ENCODE measurements at regions of chr1 and their contacts with region 1.

Region 1: GRCh38 chr1:112674439-112674985 is at the start of gene MOV10:
- DNase-seq: peak; percentile 36
- H3K4me3 ChIP-seq: peak within 1 kb of the TSS; percentile 80
- H3K27ac ChIP-seq: peak within 1 kb of the TSS; percentile 86
- H3K27me3 ChIP-seq: no peaks in the 10 kb centered on the region
- CTCF ChIP-seq: no peak
- polyA plus RNA-seq, gene MOV10: 58.1 and 59.2 TPM in 2 replicates

Region 2: GRCh38 chr1:112144733-112145426 is 529.6 kb before region 1 on chr1:
- CTCF ChIA-PET with region 1: no interaction called
- POLR2A ChIA-PET with region 1: no interaction called
- DNase-seq: no peak
- H3K4me3 ChIP-seq: no peak overlapping the region
- H3K27ac ChIP-seq: no peak overlapping the region
- H3K27me3 ChIP-seq: no peaks in the 10 kb centered on the region
- CTCF ChIP-seq: no peak

Region 3: GRCh38 chr1:112619520-112620376 is 54.8 kb before region 1 on chr1 and contains the start of gene CAPZA1:
- CTCF ChIA-PET with region 1: no interaction called
- POLR2A ChIA-PET with region 1: interaction called, 13 read pairs
- DNase-seq: peak; percentile 78
- H3K4me3 ChIP-seq: peak within 1 kb of the TSS; percentile 98
- H3K27ac ChIP-seq: peak within 1 kb of the TSS; percentile 96
- H3K27me3 ChIP-seq: no peaks in the 10 kb centered on the region
- CTCF ChIP-seq: no peak
- polyA plus RNA-seq, gene CAPZA1: 195 and 273 TPM in 2 replicates

Region 4: GRCh38 chr1:112651205-112651604 is 23.3 kb before region 1 on chr1:
- CTCF ChIA-PET with region 1: interaction called, 10 read pairs
- POLR2A ChIA-PET with region 1: no interaction called
- DNase-seq: no peak
- H3K4me3 ChIP-seq: no peak overlapping the region
- H3K27ac ChIP-seq: no peak overlapping the region
- H3K27me3 ChIP-seq: no peaks in the 10 kb centered on the region
- CTCF ChIP-seq: no peak

Region 5: GRCh38 chr1:112700290-112701226 is 26.0 kb after region 1 on chr1:
- CTCF ChIA-PET with region 1: interaction called, 4 read pairs
- POLR2A ChIA-PET with region 1: interaction called, 25 read pairs
- DNase-seq: peak; percentile 89
- H3K4me3 ChIP-seq: peak overlapping the region; percentile 17; the same call in 1 of the 2 replicates
- H3K27ac ChIP-seq: peak overlapping the region; percentile 92
- H3K27me3 ChIP-seq: no peaks in the 10 kb centered on the region
- CTCF ChIP-seq: no peak; the same call in 1 of the 2 replicates

Region 6: DNA sequence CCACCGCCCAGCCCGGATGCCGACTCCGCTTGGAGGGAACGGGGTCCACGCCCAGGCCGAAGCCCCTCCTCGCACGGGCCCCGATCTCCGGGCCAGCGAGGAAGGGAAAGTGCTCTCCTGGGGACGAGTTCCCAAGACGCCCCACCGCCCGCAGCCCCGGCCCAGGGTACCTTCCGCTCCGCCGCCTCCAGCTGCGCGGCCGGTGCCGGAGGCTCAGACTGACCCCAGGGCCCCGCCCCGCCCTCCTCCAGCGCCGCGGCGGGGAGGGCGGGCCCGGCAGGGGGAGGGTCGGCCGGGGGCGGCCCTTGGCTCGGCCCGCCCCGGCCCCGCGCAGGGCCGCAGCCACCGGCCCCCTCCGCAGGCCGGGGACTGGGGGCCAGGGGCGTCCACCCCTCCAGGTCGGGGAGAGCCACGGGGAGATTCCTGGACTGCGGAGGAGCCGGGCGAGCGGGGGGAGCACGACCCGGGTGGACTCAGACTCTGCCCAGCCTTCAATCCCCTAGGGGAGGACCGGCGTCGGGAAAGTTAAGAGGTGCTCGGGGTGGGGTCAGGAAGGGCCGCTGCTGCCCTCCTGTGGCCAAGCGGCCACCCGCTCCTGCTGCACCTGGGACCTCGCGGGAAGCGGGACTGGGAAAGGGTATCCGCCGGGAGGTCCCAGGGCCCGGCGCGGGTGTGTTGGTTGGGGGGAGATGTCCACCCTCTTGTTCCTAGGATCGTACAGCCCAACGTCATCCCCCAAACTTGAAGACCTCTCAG is 32.6 kb after region 1 on chr1 and contains the start of gene RHOC:
- CTCF ChIA-PET with region 1: interaction called, 14 read pairs
- POLR2A ChIA-PET with region 1: interaction called, 25 read pairs
- DNase-seq: no peak
- H3K4me3 ChIP-seq: peak within 1 kb of the TSS; percentile 88
- H3K27ac ChIP-seq: peak within 1 kb of the TSS; percentile 74
- H3K27me3 ChIP-seq: no peaks in the 10 kb centered on the region
- CTCF ChIP-seq: peak; percentile 94
- polyA plus RNA-seq, gene RHOC: 574 and 734 TPM in 2 replicates

Measured in AG04450 (cell line).